Mammary epithelial cell (primary cell): ENCODE measurements at regions of chr2 and their contacts with region 1.

Region 1: GRCh38 chr2:42974721-42975717 is 182.6 kb upstream of the HAAO start:
- DNase-seq: no peak
- H3K4me3 ChIP-seq: no peak overlapping the region
- H3K27ac ChIP-seq: peak overlapping the region; percentile 11
- H3K4me1 ChIP-seq: peaks cover 46% of the 10 kb centered on the region
- H3K27me3 ChIP-seq: no peaks in the 10 kb centered on the region
- CTCF ChIP-seq: peak; percentile 80 to 92

Region 2: GRCh38 chr2:41160439-41160838 is 1814.6 kb before region 1 on chr2:
- CTCF ChIA-PET with region 1: no interaction called
- dilution Hi-C with region 1: no loop called
- in situ Hi-C with region 1: no loop called
- intact Hi-C with region 1: no loop called
- DNase-seq: no peak
- H3K4me3 ChIP-seq: no peak overlapping the region
- H3K27ac ChIP-seq: no peak overlapping the region
- H3K4me1 ChIP-seq: no peaks in the 10 kb centered on the region
- H3K27me3 ChIP-seq: no peaks in the 10 kb centered on the region
- CTCF ChIP-seq: no peak

Region 3: DNA sequence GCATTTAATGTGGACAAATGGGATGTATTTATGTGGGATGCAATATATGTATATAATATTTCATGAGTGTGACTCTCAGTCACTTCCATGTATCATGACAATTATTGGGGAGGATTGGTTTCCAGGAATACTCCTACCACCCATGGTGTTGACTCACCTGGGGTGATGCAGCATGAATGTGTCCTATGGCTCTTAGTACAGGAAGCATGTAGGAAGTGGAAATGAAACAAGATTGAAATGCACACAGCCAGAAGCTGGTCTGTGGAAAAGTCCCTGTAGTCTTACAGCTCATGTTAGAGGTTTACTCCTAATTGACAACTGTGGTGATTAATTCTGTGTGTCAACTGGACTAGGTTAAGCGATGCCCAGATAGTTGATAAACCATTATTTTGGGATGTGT is 93.3 kb before region 1 on chr2:
- CTCF ChIA-PET with region 1: no interaction called
- dilution Hi-C with region 1: loop called (anchors 5 kb)
- in situ Hi-C with region 1: no loop called
- intact Hi-C with region 1: no loop called
- DNase-seq: peak; percentile 93
- H3K4me3 ChIP-seq: no peak overlapping the region
- H3K27ac ChIP-seq: peak overlapping the region; percentile 20
- H3K4me1 ChIP-seq: peaks cover 40% of the 10 kb centered on the region
- H3K27me3 ChIP-seq: no peaks in the 10 kb centered on the region
- CTCF ChIP-seq: no peak

Region 4: GRCh38 chr2:43041661-43042360 is 66.8 kb after region 1 on chr2:
- CTCF ChIA-PET with region 1: no interaction called
- dilution Hi-C with region 1: loop called (anchors 5 kb)
- in situ Hi-C with region 1: no loop called
- intact Hi-C with region 1: no loop called
- DNase-seq: peak; percentile 88
- H3K4me3 ChIP-seq: no peak overlapping the region
- H3K27ac ChIP-seq: peak overlapping the region; percentile 82
- H3K4me1 ChIP-seq: peaks cover 51% of the 10 kb centered on the region
- H3K27me3 ChIP-seq: no peaks in the 10 kb centered on the region
- CTCF ChIP-seq: no peak